CD8-positive, alpha-beta T cell (primary cell): ENCODE measurements at regions of chr14 and their contacts with region 1.

Region 1: GRCh38 chr14:102591889-102592763 is at the start of gene RCOR1:
- DNase-seq: peak; percentile 96 to 99 (median 98)
- ATAC-seq: peak; percentile 89
- H3K4me3 ChIP-seq: peak within 1 kb of the TSS; percentile 59 to 94
- H3K4me3 Mint-ChIP-seq: peak within 1 kb of the TSS; percentile 89
- H3K27ac ChIP-seq: peak within 1 kb of the TSS; percentile 89 to 91
- H3K27ac Mint-ChIP-seq: peak within 1 kb of the TSS; percentile 94
- H3K4me1 ChIP-seq: peaks cover 18% of the 10 kb centered on the region
- H3K4me1 Mint-ChIP-seq: peaks cover 30% of the 10 kb centered on the region
- H3K27me3 ChIP-seq: no peaks in the 10 kb centered on the region
- H3K27me3 Mint-ChIP-seq: no peaks in the 10 kb centered on the region
- CTCF ChIP-seq: no peak
- total RNA-seq, gene RCOR1: 31.7 to 34.4 TPM

Region 2: GRCh38 chr14:101964297-101965144 is 627.6 kb before region 1 on chr14 and contains the start of gene DYNC1H1:
- CTCF ChIA-PET with region 1: no interaction called
- POLR2A ChIA-PET with region 1: no interaction called
- intact Hi-C with region 1: loop called in 1 of 2 experiments (anchors 2 kb)
- DNase-seq: peak; percentile 75 to 94 (median 87)
- ATAC-seq: peak; percentile 84
- H3K4me3 ChIP-seq: peak within 1 kb of the TSS; percentile 87 to 92
- H3K4me3 Mint-ChIP-seq: peak within 1 kb of the TSS; percentile 90
- H3K27ac ChIP-seq: peak within 1 kb of the TSS; percentile 74 to 88
- H3K27ac Mint-ChIP-seq: peak within 1 kb of the TSS; percentile 91
- H3K4me1 ChIP-seq: peaks cover 31% of the 10 kb centered on the region
- H3K4me1 Mint-ChIP-seq: peaks cover 45% of the 10 kb centered on the region
- H3K27me3 ChIP-seq: no peaks in the 10 kb centered on the region
- H3K27me3 Mint-ChIP-seq: no peaks in the 10 kb centered on the region
- CTCF ChIP-seq: no peak
- total RNA-seq, gene DYNC1H1: 359 TPM

Region 3: GRCh38 chr14:102351026-102351425 is 241.1 kb before region 1 on chr14:
- CTCF ChIA-PET with region 1: no interaction called
- POLR2A ChIA-PET with region 1: no interaction called
- intact Hi-C with region 1: no loop called
- DNase-seq: no peak
- ATAC-seq: no peak
- H3K4me3 ChIP-seq: no peak overlapping the region
- H3K4me3 Mint-ChIP-seq: no peak overlapping the region
- H3K27ac ChIP-seq: no peak overlapping the region
- H3K27ac Mint-ChIP-seq: no peak overlapping the region
- H3K4me1 ChIP-seq: no peaks in the 10 kb centered on the region
- H3K4me1 Mint-ChIP-seq: no peaks in the 10 kb centered on the region
- H3K27me3 ChIP-seq: no peaks in the 10 kb centered on the region
- H3K27me3 Mint-ChIP-seq: no peaks in the 10 kb centered on the region
- CTCF ChIP-seq: no peak

Region 4: GRCh38 chr14:102362545-102363181 is 229.5 kb before region 1 on chr14 and contains the starts of genes CINP and TECPR2:
- CTCF ChIA-PET with region 1: no interaction called
- POLR2A ChIA-PET with region 1: no interaction called
- intact Hi-C with region 1: loop called (anchors 1 to 5 kb)
- DNase-seq: peak; percentile 93 to 97 (median 96)
- ATAC-seq: peak; percentile 90
- H3K4me3 ChIP-seq: peak within 1 kb of the TSS; percentile 67 to 75
- H3K4me3 Mint-ChIP-seq: peak within 1 kb of the TSS; percentile 95
- H3K27ac ChIP-seq: peak within 1 kb of the TSS; percentile 82 to 86
- H3K27ac Mint-ChIP-seq: peak within 1 kb of the TSS; percentile 96
- H3K4me1 ChIP-seq: peaks cover 15% of the 10 kb centered on the region
- H3K4me1 Mint-ChIP-seq: peaks cover 24% of the 10 kb centered on the region
- H3K27me3 ChIP-seq: no peaks in the 10 kb centered on the region
- H3K27me3 Mint-ChIP-seq: no peaks in the 10 kb centered on the region
- CTCF ChIP-seq: no peak
- total RNA-seq, gene CINP: 15.9 to 19.2 TPM
- total RNA-seq, gene TECPR2: 3.4 to 5.8 TPM

Region 5: DNA sequence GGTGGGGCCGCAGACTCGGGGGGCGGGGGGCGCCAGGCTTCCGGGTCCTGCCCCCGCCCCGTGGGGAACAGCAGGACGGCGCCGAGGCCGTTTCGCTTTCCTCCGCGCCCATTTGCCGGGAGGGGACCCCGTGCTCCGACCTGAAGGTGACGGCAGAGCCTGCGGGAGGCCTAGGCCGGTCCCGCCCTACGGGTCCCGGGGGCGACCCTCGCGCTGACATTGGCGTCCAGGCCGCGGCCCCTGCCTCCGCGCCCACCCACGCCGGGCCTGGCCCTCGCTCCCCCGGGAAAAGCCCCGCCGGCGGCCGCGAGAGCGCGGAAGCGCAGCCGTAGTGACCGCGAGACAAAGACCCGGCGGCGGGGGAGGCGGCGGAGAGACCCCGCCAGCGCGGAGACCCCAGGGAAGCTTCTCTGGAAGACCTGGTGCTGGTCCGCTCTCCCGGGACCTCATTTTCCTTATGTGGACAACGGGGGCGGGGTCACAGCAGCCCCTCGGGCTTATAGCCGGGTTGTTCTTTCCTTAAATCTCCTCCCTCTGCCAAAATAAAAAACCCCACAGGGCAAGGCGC is 36.8 kb before region 1 on chr14:
- CTCF ChIA-PET with region 1: interaction called, 4 read pairs
- POLR2A ChIA-PET with region 1: no interaction called
- intact Hi-C with region 1: loop called (anchors 1 kb)
- DNase-seq: peak; percentile 35 to 79 (median 60)
- ATAC-seq: peak; percentile 92
- H3K4me3 ChIP-seq: peak overlapping the region; percentile 62 to 80
- H3K4me3 Mint-ChIP-seq: peak overlapping the region; percentile 79
- H3K27ac ChIP-seq: peak overlapping the region; percentile 74 to 83
- H3K27ac Mint-ChIP-seq: peak overlapping the region; percentile 82
- H3K4me1 ChIP-seq: peaks cover 4% of the 10 kb centered on the region
- H3K4me1 Mint-ChIP-seq: peaks cover 3% of the 10 kb centered on the region
- H3K27me3 ChIP-seq: no peaks in the 10 kb centered on the region
- H3K27me3 Mint-ChIP-seq: peaks cover under 1% of the 10 kb centered on the region
- CTCF ChIP-seq: no peak

Region 6: DNA sequence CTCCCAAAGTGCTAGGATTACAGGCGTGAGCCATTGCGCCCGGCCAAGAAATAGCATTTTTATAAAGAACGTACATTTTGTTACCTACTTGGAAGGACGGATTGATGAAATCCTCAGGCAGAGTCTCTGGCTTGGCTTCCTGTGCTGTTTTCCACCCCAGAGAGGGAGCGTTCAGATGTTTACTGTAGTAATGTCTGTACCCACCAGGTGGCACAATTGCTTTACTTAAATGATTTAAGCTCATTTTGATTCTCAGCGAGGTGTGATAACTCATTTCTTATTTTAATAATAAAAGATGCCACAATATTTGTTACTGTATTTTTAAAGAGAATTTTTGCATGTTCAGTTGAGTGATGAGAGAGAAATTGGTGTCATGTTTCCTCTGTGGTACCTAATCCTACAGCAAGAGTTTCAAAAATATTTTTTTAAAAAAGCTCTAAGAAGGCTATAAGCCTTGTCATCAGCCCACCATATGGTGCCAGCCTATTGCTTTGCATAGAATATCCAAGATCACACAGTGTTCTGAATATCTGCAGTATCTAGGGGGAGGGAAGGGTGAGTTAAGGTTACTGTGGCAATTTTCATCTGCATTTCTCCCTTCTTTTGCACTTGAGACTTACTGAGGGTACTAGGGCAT is 102.5 kb after region 1 on chr14:
- CTCF ChIA-PET with region 1: interaction called, 13 read pairs
- POLR2A ChIA-PET with region 1: no interaction called
- intact Hi-C with region 1: loop called in 1 of 2 experiments (anchors 10 kb)
- DNase-seq: peak; percentile 8 to 78 (median 59)
- ATAC-seq: peak; percentile 84
- H3K4me3 ChIP-seq: no peak overlapping the region
- H3K4me3 Mint-ChIP-seq: no peak overlapping the region
- H3K27ac ChIP-seq: no peak overlapping the region
- H3K27ac Mint-ChIP-seq: no peak overlapping the region
- H3K4me1 ChIP-seq: peaks cover 8% of the 10 kb centered on the region
- H3K4me1 Mint-ChIP-seq: peaks cover 38% of the 10 kb centered on the region
- H3K27me3 ChIP-seq: no peaks in the 10 kb centered on the region
- H3K27me3 Mint-ChIP-seq: no peaks in the 10 kb centered on the region
- CTCF ChIP-seq: peak; percentile 86

Region 7: DNA sequence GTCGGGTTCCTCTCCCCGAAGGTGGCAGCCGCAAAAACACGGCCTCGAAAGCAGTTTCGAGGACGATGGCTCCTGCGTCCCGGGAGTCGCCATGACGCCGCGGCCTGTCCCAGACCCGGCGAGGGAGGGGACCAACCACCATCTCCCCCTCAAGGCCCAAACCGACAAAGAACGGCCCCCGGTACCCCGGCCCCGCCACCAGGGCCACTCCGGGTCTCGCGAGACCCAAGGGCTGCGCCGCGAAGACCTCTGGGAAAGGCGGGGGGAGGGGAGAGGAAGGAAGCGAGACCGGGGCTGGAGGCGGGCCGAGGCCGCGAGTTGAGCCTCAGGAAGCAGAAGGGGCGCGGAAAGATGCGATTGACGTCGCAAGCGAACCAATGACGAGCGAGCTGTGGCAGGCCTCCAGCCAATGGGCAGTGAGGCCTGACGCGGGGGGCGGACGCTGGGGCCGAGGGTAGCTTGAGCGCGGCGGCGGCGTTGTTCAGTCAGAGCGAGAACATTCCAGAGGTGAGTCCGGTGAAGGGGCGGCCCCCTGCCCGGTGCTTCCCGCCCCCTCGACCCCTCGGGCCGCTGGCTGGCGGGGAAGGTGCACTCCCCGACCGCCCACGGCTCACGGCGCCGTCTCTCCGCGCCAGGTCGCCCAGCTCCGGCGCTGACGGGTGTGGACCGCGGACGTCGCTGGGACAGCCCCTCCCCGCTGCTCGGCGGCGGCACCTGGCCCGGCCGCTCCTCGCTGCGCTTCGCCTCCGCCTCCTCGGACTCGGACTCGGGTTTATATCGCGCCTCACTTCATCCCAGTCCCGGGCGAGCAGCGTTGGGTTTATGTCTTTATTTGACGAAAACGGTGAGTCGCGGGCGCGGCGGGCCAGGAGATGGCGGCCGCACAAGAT is 741.9 kb after region 1 on chr14 and contains the start of gene EIF5:
- CTCF ChIA-PET with region 1: no interaction called
- POLR2A ChIA-PET with region 1: no interaction called
- intact Hi-C with region 1: loop called in 1 of 2 experiments (anchors 10 kb)
- DNase-seq: peak; percentile 97 to 100 (median 99)
- ATAC-seq: peak; percentile 86
- H3K4me3 ChIP-seq: peak within 1 kb of the TSS; percentile 85 to 92
- H3K4me3 Mint-ChIP-seq: peak within 1 kb of the TSS; percentile 97
- H3K27ac ChIP-seq: peak within 1 kb of the TSS; percentile 95 to 96
- H3K27ac Mint-ChIP-seq: peak within 1 kb of the TSS; percentile 99
- H3K4me1 ChIP-seq: peaks cover 23% of the 10 kb centered on the region
- H3K4me1 Mint-ChIP-seq: peaks cover 41% of the 10 kb centered on the region
- H3K27me3 ChIP-seq: no peaks in the 10 kb centered on the region
- H3K27me3 Mint-ChIP-seq: no peaks in the 10 kb centered on the region
- CTCF ChIP-seq: peak; percentile 38
- total RNA-seq, gene EIF5: 711 to 754 TPM

Region 8: DNA sequence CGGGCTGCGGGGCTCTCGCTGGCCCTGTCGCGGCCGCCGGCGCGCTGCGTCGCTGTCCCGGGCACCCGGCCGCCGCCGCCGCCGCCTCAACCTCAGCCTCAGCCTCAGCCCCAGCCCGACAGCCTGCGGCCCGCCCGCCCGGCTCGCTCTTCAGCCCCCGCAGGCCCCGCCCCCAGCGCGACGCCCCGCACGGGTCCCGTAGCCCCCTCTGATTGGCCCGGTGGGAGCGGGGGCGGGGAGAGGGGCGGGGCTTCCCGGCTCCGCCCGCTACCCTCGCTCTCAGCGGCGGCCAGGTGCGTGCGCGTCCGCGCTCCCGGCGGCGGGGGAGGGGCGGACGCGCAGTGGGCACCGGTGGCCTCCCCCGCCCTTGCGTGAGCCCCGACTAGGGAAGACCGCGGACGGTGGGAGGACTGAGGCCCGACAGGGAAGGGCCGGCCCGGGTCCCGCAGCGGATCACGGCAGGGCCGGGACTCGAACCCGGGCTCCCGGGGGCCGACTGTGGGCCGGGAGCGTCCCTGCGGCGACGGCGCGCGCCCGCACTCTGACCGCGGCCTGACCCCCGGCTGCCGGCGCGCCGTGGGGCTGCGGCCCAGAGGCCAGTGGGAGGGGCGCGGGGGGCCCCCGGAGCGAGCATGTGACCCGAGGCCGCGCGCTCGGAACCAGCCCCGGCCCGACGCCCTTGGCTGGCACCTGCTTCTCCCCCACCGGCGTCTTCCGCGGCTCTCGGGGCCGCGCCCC is 1255.5 kb after region 1 on chr14 and contains the start of gene PPP1R13B:
- CTCF ChIA-PET with region 1: no interaction called
- POLR2A ChIA-PET with region 1: no interaction called
- intact Hi-C with region 1: loop called in 1 of 2 experiments (anchors 5 kb)
- DNase-seq: peak; percentile 88 to 97 (median 92)
- ATAC-seq: peak; percentile 98
- H3K4me3 ChIP-seq: peak within 1 kb of the TSS; percentile 65 to 73
- H3K4me3 Mint-ChIP-seq: peak within 1 kb of the TSS; percentile 90
- H3K27ac ChIP-seq: peak within 1 kb of the TSS in 1 of 2 experiments; percentile 27
- H3K27ac Mint-ChIP-seq: peak within 1 kb of the TSS; percentile 74
- H3K4me1 ChIP-seq: peaks cover 14% of the 10 kb centered on the region
- H3K4me1 Mint-ChIP-seq: peaks cover 20% of the 10 kb centered on the region
- H3K27me3 ChIP-seq: no peaks in the 10 kb centered on the region
- H3K27me3 Mint-ChIP-seq: no peaks in the 10 kb centered on the region
- CTCF ChIP-seq: no peak
- total RNA-seq, gene PPP1R13B: 20.9 to 22.6 TPM